ENCODE measurements at regions of chr21 and their contacts with region 1.

Region 1: GRCh38 chr21:41121785-41122421 is 46.1 kb upstream of the BACE2 start:
- DNase-seq: peak; percentile 28 to 79
- ATAC-seq: peak; percentile 87 to 93
- H3K4me3 ChIP-seq: no peak overlapping the region
- H3K27ac ChIP-seq: no peak overlapping the region
- H3K4me1 ChIP-seq: no peaks in the 10 kb centered on the region
- CTCF ChIP-seq: peak; percentile 55
- EP300 ChIP-seq: no peak
- POLR2A ChIP-seq: no peak
- RAD21 ChIP-seq: peak; percentile 62 to 75

Region 2: GRCh38 chr21:41108668-41109563 is 13.0 kb before region 1 on chr21:
- CTCF ChIA-PET with region 1: interaction called, 15 read pairs
- POLR2A ChIA-PET with region 1: no interaction called
- DNase-seq: no peak
- ATAC-seq: no peak
- H3K4me3 ChIP-seq: no peak overlapping the region
- H3K27ac ChIP-seq: no peak overlapping the region
- H3K4me1 ChIP-seq: no peaks in the 10 kb centered on the region
- CTCF ChIP-seq: no peak
- EP300 ChIP-seq: no peak
- POLR2A ChIP-seq: no peak
- RAD21 ChIP-seq: no peak

Region 3: GRCh38 chr21:41133896-41134522 is 12.1 kb after region 1 on chr21:
- CTCF ChIA-PET with region 1: interaction called, 67 read pairs
- POLR2A ChIA-PET with region 1: no interaction called
- DNase-seq: peak; percentile 41 to 47
- ATAC-seq: peak; percentile 68 to 77; a peak in 3 of 6 replicates
- H3K4me3 ChIP-seq: no peak overlapping the region
- H3K27ac ChIP-seq: no peak overlapping the region
- H3K4me1 ChIP-seq: no peaks in the 10 kb centered on the region
- CTCF ChIP-seq: peak; percentile 42; the same call in 2 of the 3 replicates
- EP300 ChIP-seq: no peak
- POLR2A ChIP-seq: no peak
- RAD21 ChIP-seq: peak in 1 of 2 experiments; percentile 45; a peak in 1 of 5 replicates

Region 4: GRCh38 chr21:41167348-41168342 is 45.7 kb after region 1 on chr21 and contains the start of gene BACE2:
- CTCF ChIA-PET with region 1: interaction called, 16 read pairs
- POLR2A ChIA-PET with region 1: no interaction called
- DNase-seq: peak; percentile 31 to 72
- ATAC-seq: peak; percentile 87 to 89
- H3K4me3 ChIP-seq: peak within 1 kb of the TSS; percentile 69
- H3K27ac ChIP-seq: peak within 1 kb of the TSS; percentile 91 to 97
- H3K4me1 ChIP-seq: peaks cover 13% of the 10 kb centered on the region; the same call in 2 of the 3 replicates
- CTCF ChIP-seq: peak; percentile 33; the same call in 2 of the 3 replicates
- EP300 ChIP-seq: no peak
- POLR2A ChIP-seq: no peak; the same call in 1 of the 2 replicates
- RAD21 ChIP-seq: no peak
- polyA plus RNA-seq, gene BACE2: 23.7 and 26.0 TPM in 2 replicates

Region 5: GRCh38 chr21:41179796-41180195 is 57.9 kb after region 1 on chr21:
- CTCF ChIA-PET with region 1: no interaction called
- POLR2A ChIA-PET with region 1: no interaction called
- DNase-seq: no peak
- ATAC-seq: no peak
- H3K4me3 ChIP-seq: no peak overlapping the region
- H3K27ac ChIP-seq: no peak overlapping the region
- H3K4me1 ChIP-seq: no peaks in the 10 kb centered on the region
- CTCF ChIP-seq: no peak
- EP300 ChIP-seq: no peak
- POLR2A ChIP-seq: no peak
- RAD21 ChIP-seq: no peak

Measured in A549 (cell line).